H1 (cell line): ENCODE measurements at regions of chr5 and their contacts with region 1.

Region 1: DNA sequence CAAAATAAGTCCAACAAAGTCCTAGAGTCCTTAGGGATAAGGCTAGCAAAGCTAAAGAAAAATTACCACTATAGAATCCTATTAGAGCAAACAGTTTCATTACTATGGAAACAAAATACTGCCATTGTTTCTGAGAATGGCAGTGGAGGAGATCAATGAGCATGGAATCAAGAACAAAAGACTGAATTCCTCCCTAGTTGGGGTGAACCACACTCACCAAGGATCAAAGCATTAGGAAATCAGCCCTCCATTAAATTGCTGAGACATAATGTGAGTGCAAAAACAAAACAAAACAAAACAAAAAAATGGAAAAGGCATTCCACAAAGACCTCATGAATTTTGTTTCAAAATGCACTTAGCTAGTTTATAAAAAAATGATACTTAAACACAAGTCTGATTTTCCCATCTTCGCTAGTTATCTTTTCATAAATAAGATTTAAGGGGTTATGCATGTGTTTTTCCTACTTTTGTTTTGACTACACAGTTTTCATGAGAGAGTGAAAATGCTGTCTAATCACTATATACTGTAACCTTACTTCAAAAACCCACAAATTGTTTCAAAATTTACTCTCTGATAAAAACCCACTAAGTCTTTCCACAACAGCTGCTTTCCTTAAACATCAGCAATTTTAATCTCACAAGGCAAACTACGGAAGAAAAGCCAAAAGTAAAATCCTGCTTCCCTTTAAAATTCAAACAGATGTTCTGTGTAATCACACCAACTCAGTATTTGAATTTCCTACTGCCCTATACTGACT is 9.7 kb downstream of the SERINC5 start:
- DNase-seq: no peak
- H3K4me3 ChIP-seq: peak overlapping the region in 1 of 4 experiments; percentile 34; a peak in 2 of 8 replicates
- H3K27ac ChIP-seq: peak overlapping the region; percentile 60
- H3K4me1 ChIP-seq: peaks cover 6 to 32% (median 25%) of the 10 kb centered on the region in 4 experiments
- H3K27me3 ChIP-seq: no peaks in the 10 kb centered on the region
- CTCF ChIP-seq: no peak
- EP300 ChIP-seq: peak in 1 of 2 experiments; percentile 89; a peak in 1 of 3 replicates
- POLR2A ChIP-seq: no peak
- RAD21 ChIP-seq: no peak

Region 2: GRCh38 chr5:80125962-80126480 is 120.2 kb before region 1 on chr5:
- CTCF ChIA-PET with region 1: no interaction called
- POLR2A ChIA-PET with region 1: no interaction called
- DNase-seq: no peak
- H3K4me3 ChIP-seq: no peak overlapping the region
- H3K27ac ChIP-seq: no peak overlapping the region
- H3K4me1 ChIP-seq: no peaks in the 10 kb centered on the region; a peak in 1 of 7 replicates
- H3K27me3 ChIP-seq: peaks cover 0 to 2% (median 0%) of the 10 kb centered on the region in 4 experiments; a peak in 1 of 7 replicates
- CTCF ChIP-seq: no peak
- EP300 ChIP-seq: no peak
- POLR2A ChIP-seq: no peak
- RAD21 ChIP-seq: no peak

Region 3: DNA sequence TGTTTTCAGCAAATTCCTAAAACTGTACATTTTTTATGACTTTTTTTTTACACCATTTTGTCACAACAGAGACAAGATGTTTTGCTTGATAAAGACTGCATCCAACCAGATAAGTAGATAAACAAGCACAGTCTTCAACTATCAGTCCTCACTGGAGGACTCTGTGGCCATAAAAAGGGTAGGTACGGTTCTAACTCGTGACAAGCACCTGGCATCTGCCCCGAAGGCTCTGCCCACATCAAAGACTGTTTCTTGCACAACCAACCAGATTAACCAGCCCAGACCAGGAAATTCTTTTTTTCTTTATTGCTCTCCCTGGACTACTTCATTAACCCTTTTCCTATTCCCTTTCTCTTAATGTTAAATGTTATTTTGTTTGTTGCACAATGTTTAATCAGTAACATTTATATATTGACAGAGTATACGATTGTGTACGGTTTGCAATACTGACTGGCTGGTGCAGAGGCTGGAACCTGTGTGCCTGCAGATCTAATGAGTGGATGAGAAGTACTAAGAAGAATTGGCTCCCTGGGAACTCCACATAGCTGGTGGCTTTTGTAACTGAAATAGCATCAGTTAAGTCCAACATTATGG is 64.5 kb before region 1 on chr5:
- CTCF ChIA-PET with region 1: interaction called, 3 read pairs
- POLR2A ChIA-PET with region 1: interaction called, 18 read pairs
- DNase-seq: no peak
- H3K4me3 ChIP-seq: no peak overlapping the region
- H3K27ac ChIP-seq: peak overlapping the region; percentile 39; the same call in 1 of the 2 replicates
- H3K4me1 ChIP-seq: peaks cover 21 to 41% (median 32%) of the 10 kb centered on the region in 4 experiments
- H3K27me3 ChIP-seq: no peaks in the 10 kb centered on the region
- CTCF ChIP-seq: no peak
- EP300 ChIP-seq: no peak
- POLR2A ChIP-seq: no peak
- RAD21 ChIP-seq: no peak

Region 4: GRCh38 chr5:80229902-80230255 is 16.3 kb before region 1 on chr5:
- CTCF ChIA-PET with region 1: interaction called, 3 read pairs
- POLR2A ChIA-PET with region 1: interaction called, 11 read pairs
- DNase-seq: no peak
- H3K4me3 ChIP-seq: no peak overlapping the region
- H3K27ac ChIP-seq: no peak overlapping the region
- H3K4me1 ChIP-seq: peaks cover 0 to 8% (median 3%) of the 10 kb centered on the region in 4 experiments; a peak in 5 of 7 replicates
- H3K27me3 ChIP-seq: no peaks in the 10 kb centered on the region
- CTCF ChIP-seq: no peak
- EP300 ChIP-seq: no peak
- POLR2A ChIP-seq: no peak
- RAD21 ChIP-seq: no peak

Region 5: DNA sequence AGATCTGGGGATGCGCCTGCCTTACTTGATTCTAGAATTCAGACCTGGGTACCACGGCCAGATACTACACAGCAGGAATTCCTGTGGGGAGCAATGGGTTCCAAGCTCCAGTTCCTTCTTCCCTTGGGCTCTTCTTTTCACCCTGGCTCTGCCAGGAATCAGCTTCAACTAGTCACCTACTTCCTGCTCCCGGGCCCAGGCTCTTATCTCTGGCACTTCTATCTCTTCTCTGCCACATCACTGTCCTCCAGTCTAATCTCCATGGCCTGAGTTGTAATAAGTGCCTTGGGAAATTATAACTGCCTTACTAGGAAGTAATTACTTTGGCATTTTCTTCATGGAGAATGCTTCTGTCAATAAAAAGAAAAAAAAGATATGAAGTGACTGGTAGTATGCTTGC is 35.9 kb after region 1 on chr5:
- CTCF ChIA-PET with region 1: no interaction called
- POLR2A ChIA-PET with region 1: no interaction called
- DNase-seq: no peak
- H3K4me3 ChIP-seq: no peak overlapping the region
- H3K27ac ChIP-seq: no peak overlapping the region
- H3K4me1 ChIP-seq: no peaks in the 10 kb centered on the region
- H3K27me3 ChIP-seq: no peaks in the 10 kb centered on the region
- CTCF ChIP-seq: no peak
- EP300 ChIP-seq: no peak
- POLR2A ChIP-seq: no peak
- RAD21 ChIP-seq: no peak